Caco-2 (cell line): ENCODE measurements at regions of chr5 and their contacts with region 1.

Region 1: DNA sequence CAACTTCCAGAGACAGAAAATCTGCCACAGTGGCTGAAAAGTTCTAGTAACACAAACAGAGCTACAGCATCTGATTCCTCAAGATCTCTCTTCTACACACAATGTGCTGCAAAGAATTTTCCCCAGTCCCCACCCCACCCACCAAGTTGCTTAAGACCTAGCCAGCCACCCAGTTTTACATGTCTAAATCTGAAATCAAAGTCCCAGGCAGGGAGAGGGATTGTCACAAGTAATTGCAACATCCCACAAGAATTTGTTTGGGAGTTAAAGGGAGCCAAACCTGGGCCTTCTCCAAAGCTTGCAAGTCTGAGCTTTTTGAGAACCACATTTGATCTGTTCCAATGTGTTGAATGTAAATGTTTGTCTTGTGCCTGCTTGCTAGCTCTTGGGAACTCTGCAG is 15.5 kb downstream of the IGIP start:
- DNase-seq: peak in 1 of 2 experiments; percentile 24
- H3K4me3 ChIP-seq: no peak overlapping the region
- H3K4me3 Mint-ChIP-seq: no peak overlapping the region
- H3K27ac Mint-ChIP-seq: no peak overlapping the region
- H3K4me1 ChIP-seq: no peaks in the 10 kb centered on the region
- H3K4me1 Mint-ChIP-seq: no peaks in the 10 kb centered on the region
- H3K27me3 ChIP-seq: no peaks in the 10 kb centered on the region
- H3K27me3 Mint-ChIP-seq: no peaks in the 10 kb centered on the region
- CTCF ChIP-seq: no peak

Region 2: DNA sequence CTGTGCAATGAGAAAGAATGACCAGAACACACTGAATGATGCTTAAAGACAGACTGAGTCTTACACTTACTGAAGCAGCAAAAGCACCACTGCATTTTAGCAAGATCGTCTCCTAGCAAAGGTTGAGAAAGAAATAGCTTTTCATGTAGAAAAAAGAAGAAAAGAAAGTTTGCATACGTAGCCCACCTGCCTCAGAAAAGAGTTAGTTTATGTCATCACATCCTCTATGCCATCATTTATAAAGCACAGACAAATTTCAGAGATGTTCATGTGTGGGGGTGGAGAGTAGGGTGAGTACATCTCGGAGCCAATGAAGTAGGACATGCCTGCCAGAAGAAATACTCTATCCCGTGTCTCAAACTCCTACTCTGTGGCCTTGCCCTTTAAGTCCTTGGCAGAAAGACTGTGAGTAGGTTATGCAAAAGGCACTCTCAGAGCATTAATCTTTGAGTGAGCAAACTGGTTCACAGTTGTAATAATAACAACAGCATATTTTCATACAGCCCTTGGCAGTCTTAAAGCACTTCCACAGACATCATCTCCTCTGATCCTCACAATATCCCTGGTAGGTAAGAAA is 120.6 kb before region 1 on chr5:
- CTCF ChIA-PET with region 1: no interaction called
- POLR2A ChIA-PET with region 1: no interaction called
- intact Hi-C with region 1: no loop called
- DNase-seq: no peak
- H3K4me3 ChIP-seq: no peak overlapping the region
- H3K4me3 Mint-ChIP-seq: no peak overlapping the region
- H3K27ac Mint-ChIP-seq: no peak overlapping the region
- H3K4me1 ChIP-seq: peaks cover 43% of the 10 kb centered on the region
- H3K4me1 Mint-ChIP-seq: peaks cover 2% of the 10 kb centered on the region
- H3K27me3 ChIP-seq: no peaks in the 10 kb centered on the region
- H3K27me3 Mint-ChIP-seq: no peaks in the 10 kb centered on the region
- CTCF ChIP-seq: no peak

Region 3: DNA sequence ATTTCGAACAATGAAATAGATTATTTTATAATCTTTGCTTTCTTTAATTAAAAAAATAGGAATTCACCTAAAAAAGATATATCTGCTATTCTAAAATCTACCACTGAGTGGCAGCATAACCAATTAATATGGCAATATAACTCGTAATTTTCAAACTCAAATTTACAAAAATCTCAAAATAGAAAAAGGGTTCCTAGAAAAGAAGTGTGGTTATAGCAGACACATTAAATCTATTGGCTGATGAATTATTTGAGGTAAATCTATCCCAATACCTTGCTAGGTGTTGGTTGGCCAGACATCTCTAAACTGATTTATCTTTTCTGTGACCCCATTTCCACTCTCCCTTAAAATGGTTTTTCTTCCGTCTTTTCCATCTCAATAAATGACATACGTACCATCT is 67.9 kb before region 1 on chr5:
- CTCF ChIA-PET with region 1: interaction called, 7 read pairs
- POLR2A ChIA-PET with region 1: no interaction called
- intact Hi-C with region 1: loop called (anchors 1 kb)
- DNase-seq: no peak
- H3K4me3 ChIP-seq: no peak overlapping the region
- H3K4me3 Mint-ChIP-seq: no peak overlapping the region
- H3K27ac Mint-ChIP-seq: no peak overlapping the region
- H3K4me1 ChIP-seq: no peaks in the 10 kb centered on the region
- H3K4me1 Mint-ChIP-seq: peaks cover 7% of the 10 kb centered on the region
- H3K27me3 ChIP-seq: no peaks in the 10 kb centered on the region
- H3K27me3 Mint-ChIP-seq: peaks cover 5% of the 10 kb centered on the region
- CTCF ChIP-seq: peak; percentile 31 to 70

Region 4: DNA sequence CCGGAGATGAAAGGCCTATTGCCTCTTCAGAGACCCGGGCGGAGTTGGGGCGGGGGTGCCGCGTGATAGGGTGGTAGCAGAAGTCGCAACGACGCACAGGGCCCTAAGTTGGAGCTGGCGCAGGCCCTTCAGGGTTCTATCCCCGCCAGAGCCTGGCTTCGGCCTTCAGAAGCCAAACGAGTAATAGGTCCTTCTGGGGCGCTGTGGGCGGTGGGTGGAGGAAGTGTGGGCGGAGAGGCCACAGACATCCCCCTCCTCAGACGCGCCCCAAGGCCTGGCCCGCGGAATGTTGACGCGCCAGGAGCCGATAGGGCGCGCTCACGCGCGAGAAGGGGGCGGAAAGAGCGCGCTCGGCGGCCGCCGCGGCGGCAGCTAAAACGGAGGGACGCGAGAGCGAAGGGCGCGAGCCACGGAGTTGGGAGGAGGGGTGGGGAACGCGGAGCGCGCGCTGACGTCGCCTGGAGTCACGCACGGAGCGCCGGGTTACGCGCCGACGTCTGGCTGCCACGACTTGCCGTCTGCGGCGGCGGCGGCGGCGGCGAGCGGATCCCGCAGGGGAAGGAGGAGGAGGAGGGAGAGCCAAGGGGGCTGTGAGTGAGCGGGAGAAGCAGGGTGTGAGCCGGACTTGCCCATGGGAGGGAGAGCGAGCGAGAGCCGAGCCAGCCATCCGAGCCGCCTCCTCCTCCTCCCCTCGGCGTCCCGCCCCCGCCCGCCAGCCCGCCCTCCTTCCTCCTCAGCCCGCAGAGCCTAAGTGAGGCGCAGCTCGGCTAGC is 33.7 kb before region 1 on chr5:
- CTCF ChIA-PET with region 1: interaction called, 10 read pairs
- POLR2A ChIA-PET with region 1: interaction called, 7 read pairs
- intact Hi-C with region 1: loop called (anchors 5 kb)
- DNase-seq: peak; percentile 94 to 95
- H3K4me3 ChIP-seq: peak overlapping the region; percentile 73
- H3K4me3 Mint-ChIP-seq: peak overlapping the region; percentile 94
- H3K27ac Mint-ChIP-seq: peak overlapping the region; percentile 92
- H3K4me1 ChIP-seq: peaks cover 4% of the 10 kb centered on the region; the same call in 1 of the 2 replicates
- H3K4me1 Mint-ChIP-seq: peaks cover 14% of the 10 kb centered on the region
- H3K27me3 ChIP-seq: no peaks in the 10 kb centered on the region
- H3K27me3 Mint-ChIP-seq: peaks cover 1% of the 10 kb centered on the region
- CTCF ChIP-seq: peak in 1 of 2 experiments; percentile 13

Region 5: GRCh38 chr5:140113699-140114263 is 27.5 kb before region 1 on chr5 and contains the start of gene PURA:
- CTCF ChIA-PET with region 1: interaction called, 10 read pairs
- POLR2A ChIA-PET with region 1: no interaction called
- intact Hi-C with region 1: loop called (anchors 5 kb)
- DNase-seq: peak; percentile 98
- H3K4me3 ChIP-seq: peak within 1 kb of the TSS; percentile 94
- H3K4me3 Mint-ChIP-seq: peak within 1 kb of the TSS; percentile 82
- H3K27ac Mint-ChIP-seq: peak within 1 kb of the TSS; percentile 87
- H3K4me1 ChIP-seq: peaks cover 10% of the 10 kb centered on the region
- H3K4me1 Mint-ChIP-seq: peaks cover 36% of the 10 kb centered on the region
- H3K27me3 ChIP-seq: no peaks in the 10 kb centered on the region
- H3K27me3 Mint-ChIP-seq: no peaks in the 10 kb centered on the region
- CTCF ChIP-seq: peak in 1 of 2 experiments; percentile 40
- total RNA-seq, gene PURA: 14.5 and 15.2 TPM in 2 replicates

Region 6: DNA sequence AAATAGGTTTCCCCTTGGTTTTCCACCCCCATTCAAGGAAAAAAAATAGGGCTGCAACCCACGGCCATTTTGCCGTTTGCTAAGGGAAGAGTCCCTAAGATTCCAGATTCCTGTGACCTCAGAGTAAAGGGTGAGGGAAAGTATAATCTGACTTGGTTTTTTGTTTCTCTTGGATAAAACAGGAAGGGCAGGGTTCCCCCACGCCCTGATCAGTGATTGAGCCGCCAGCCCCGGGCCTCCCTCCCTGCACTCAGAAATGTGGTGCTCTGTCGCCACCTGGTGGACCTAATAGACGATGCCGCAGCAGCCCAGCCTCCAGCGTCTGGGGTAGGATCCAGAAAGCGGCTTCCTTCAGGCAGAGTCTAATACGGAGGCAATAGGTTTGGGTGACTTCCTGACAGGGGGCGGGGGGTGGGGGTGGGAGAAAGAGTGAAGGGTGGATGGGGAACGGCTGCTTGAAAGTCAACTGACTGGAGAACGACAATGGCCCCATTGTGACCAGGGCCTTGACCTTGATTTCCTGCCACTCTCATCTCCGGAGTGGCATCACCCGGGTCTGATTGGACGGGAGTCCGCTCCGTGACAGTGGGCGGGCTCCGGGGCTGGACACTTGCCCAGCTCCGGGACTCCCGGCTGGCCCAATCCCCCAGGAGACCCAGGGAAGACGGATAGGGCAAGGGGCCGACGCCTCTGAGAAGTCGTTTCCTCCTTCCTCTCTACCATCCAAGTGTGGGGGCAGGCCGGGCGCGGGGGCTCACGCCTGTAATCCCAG is 16.0 kb after region 1 on chr5:
- CTCF ChIA-PET with region 1: interaction called, 4 read pairs
- POLR2A ChIA-PET with region 1: no interaction called
- intact Hi-C with region 1: loop called (anchors 1 kb)
- DNase-seq: peak; percentile 83 to 89
- H3K4me3 ChIP-seq: no peak overlapping the region
- H3K4me3 Mint-ChIP-seq: no peak overlapping the region
- H3K27ac Mint-ChIP-seq: no peak overlapping the region
- H3K4me1 ChIP-seq: peaks cover 6% of the 10 kb centered on the region; the same call in 1 of the 2 replicates
- H3K4me1 Mint-ChIP-seq: peaks cover 2% of the 10 kb centered on the region
- H3K27me3 ChIP-seq: no peaks in the 10 kb centered on the region
- H3K27me3 Mint-ChIP-seq: no peaks in the 10 kb centered on the region
- CTCF ChIP-seq: peak; percentile 91 to 96

Region 7: DNA sequence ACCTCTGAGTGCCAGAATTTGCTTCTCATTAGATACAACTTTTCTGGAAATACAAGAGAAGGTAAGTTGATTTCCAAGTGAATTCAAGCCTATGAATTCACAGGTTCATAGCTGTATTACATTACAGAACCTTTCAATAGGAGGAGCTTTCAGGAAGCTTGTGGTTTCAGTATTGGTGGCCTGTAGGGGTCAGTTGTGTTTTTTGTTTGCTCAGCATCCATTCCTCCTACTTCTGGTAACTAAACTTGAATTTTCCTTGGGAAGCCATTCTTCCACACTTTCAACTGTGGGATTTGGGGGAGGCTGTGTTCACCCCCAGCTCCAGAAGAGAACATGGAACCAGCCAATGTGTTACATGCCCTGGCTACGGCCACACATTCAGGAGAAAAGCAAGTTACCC is 28.2 kb after region 1 on chr5:
- CTCF ChIA-PET with region 1: interaction called, 11 read pairs
- POLR2A ChIA-PET with region 1: no interaction called
- intact Hi-C with region 1: no loop called
- DNase-seq: peak in 1 of 2 experiments; percentile 19
- H3K4me3 ChIP-seq: no peak overlapping the region
- H3K4me3 Mint-ChIP-seq: no peak overlapping the region
- H3K27ac Mint-ChIP-seq: no peak overlapping the region
- H3K4me1 ChIP-seq: peaks cover 22% of the 10 kb centered on the region
- H3K4me1 Mint-ChIP-seq: peaks cover 27% of the 10 kb centered on the region
- H3K27me3 ChIP-seq: no peaks in the 10 kb centered on the region
- H3K27me3 Mint-ChIP-seq: no peaks in the 10 kb centered on the region
- CTCF ChIP-seq: peak; percentile 14 to 41